CD14-positive monocyte (primary cell): ENCODE measurements at regions of chr1 and their contacts with region 1.

Region 1: GRCh38 chr1:207084701-207085180 is 3.9 kb upstream of the C4BPB start:
- DNase-seq: peak; percentile 44 to 65 (median 60)
- H3K4me3 ChIP-seq: no peak overlapping the region
- H3K4me3 Mint-ChIP-seq: no peak overlapping the region
- H3K27ac ChIP-seq: no peak overlapping the region
- H3K27ac Mint-ChIP-seq: peak overlapping the region in 2 of 7 donors; percentile 8 to 19
- H3K4me1 ChIP-seq: peaks cover 0 to 10% of the 10 kb centered on the region in 2 donors
- H3K4me1 Mint-ChIP-seq: peaks cover 16% of the 10 kb centered on the region
- H3K27me3 ChIP-seq: peaks cover 0 to 2% of the 10 kb centered on the region in 2 donors
- H3K27me3 Mint-ChIP-seq: peaks cover 3 to 6% (median 3%) of the 10 kb centered on the region in 3 donors
- CTCF ChIP-seq: peak; percentile 71

Region 2: GRCh38 chr1:207025144-207025880 is 59.4 kb before region 1 on chr1:
- intact Hi-C with region 1: no loop called
- DNase-seq: peak in 1 of 3 donors; percentile 18
- H3K4me3 ChIP-seq: no peak overlapping the region
- H3K4me3 Mint-ChIP-seq: no peak overlapping the region
- H3K27ac ChIP-seq: no peak overlapping the region
- H3K27ac Mint-ChIP-seq: peak overlapping the region in 1 of 7 donors; percentile 20
- H3K4me1 ChIP-seq: peaks cover 14 to 15% of the 10 kb centered on the region in 2 donors
- H3K4me1 Mint-ChIP-seq: peaks cover 25% of the 10 kb centered on the region
- H3K27me3 ChIP-seq: no peaks in the 10 kb centered on the region
- H3K27me3 Mint-ChIP-seq: peaks cover 1 to 3% (median 3%) of the 10 kb centered on the region in 3 donors
- CTCF ChIP-seq: no peak

Region 3: DNA sequence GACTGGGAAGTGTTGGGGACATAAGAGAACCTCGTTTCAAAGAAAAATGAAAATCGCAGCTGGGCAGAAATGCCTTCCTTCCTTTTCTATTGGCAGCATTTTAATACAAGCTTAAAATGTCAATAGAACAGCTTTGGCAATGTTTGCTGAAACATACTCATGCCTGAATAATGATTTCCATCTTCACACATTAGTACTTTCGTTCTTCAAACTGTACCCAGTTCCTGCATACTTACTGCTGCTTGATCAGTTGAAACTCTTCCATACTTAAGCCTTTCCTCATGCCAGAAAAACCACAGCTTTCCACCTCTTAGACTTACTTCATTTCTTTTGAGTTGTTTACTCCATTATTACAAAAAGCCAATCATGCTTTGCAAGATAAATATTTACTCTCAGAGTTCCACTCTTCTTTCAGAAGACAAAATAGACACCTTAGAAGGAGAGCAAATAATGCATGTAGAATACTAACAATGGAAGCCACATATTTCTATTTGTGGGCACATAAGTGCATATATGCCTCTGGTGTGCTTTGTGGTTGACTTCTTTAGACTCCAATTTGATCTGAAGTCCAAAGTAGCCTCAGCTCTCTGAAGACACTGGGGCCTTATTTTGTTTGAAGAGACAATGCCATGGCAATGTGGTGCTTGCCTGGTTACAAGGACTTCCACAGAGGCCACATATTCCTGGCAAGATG is 214.1 kb after region 1 on chr1:
- intact Hi-C with region 1: no loop called
- DNase-seq: no peak
- H3K4me3 ChIP-seq: peak overlapping the region in 1 of 3 experiments; percentile 9
- H3K4me3 Mint-ChIP-seq: no peak overlapping the region
- H3K27ac ChIP-seq: peak overlapping the region in 1 of 2 donors; percentile 10
- H3K27ac Mint-ChIP-seq: peak overlapping the region in 1 of 7 donors; percentile 2
- H3K4me1 ChIP-seq: peaks cover 16 to 20% of the 10 kb centered on the region in 2 donors
- H3K4me1 Mint-ChIP-seq: peaks cover 22% of the 10 kb centered on the region
- H3K27me3 ChIP-seq: no peaks in the 10 kb centered on the region
- H3K27me3 Mint-ChIP-seq: peaks cover 0 to 1% (median 0%) of the 10 kb centered on the region in 3 donors
- CTCF ChIP-seq: no peak

Region 4: DNA sequence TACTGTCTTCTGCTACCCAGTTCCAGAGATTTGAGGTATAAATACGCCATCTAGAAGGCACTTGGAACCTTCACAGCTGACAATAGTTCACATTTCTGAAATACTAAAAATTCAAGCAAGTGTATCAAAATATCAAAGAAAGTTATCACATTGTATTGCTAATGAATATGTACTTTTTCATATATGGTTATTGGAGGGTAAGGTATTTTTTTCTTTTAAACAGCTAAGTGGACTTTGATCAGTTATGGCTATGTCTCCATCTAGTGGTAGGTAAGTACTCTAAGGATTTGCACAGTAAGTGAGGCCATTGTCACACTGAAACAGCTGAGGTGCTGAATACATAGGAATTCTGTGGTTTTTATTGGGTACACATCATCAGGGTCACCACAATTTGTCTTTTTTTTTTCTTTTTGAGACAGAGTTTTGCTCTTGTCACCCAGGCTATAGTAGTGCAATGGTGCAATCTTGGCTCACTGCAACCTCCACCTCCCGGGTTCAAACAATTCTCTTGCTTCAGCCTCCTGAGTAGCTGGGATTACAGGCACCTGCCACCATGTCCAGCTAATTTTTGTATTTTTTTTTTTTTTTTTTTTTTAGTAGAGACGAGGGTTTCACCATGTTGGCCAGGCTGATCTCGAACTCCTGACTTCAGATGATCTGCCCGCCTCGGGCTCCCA is 320.2 kb after region 1 on chr1:
- intact Hi-C with region 1: loop called (anchors 5 to 10 kb)
- DNase-seq: peak; percentile 29 to 70 (median 59)
- H3K4me3 ChIP-seq: no peak overlapping the region
- H3K4me3 Mint-ChIP-seq: no peak overlapping the region
- H3K27ac ChIP-seq: no peak overlapping the region
- H3K27ac Mint-ChIP-seq: no peak overlapping the region
- H3K4me1 ChIP-seq: peaks cover 26% of the 10 kb centered on the region in 2 donors
- H3K4me1 Mint-ChIP-seq: peaks cover 28% of the 10 kb centered on the region
- H3K27me3 ChIP-seq: no peaks in the 10 kb centered on the region
- H3K27me3 Mint-ChIP-seq: no peaks in the 10 kb centered on the region
- CTCF ChIP-seq: peak; percentile 85